IMR-90 (cell line): ENCODE measurements at regions of chr20 and their contacts with region 1.

Region 1: DNA sequence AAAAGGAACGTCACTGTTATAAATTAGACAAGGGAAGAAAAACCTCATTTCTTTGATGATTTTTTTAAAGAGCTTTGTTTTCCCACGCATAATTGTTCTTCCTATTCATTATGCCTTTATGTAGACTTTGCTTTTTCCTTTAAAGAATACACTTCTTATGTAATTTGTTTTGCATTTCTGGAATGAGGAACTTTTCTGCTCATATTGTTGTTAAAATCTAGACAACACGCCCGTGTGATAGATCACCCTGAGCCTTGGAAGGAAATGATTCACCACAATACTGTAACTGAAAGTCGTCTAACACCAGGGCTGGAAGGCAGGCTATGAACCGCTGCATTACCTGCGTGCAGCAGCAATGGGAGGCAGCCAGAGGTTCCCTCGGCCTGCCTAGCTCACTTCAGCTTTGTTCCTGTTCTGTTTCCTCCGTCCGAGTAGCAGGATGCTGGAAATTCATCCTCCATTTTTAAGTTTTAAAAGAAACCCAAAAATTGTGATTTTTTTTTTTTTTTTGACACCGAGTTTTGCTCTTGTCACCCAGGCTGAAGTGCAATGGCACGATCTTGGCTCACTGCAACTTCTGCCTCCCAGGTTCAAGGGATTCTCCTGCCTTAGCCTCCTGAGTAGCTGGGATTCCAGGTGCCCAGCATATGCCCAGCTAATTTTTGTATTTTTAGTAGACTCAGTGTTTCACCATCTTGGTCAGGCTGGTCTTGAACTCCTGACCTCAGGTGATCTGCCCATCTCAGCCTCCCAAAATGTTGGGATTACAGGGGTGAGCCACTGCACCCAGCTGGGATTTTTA is 49.6 kb upstream of the ZNF217 start:
- DNase-seq: peak; percentile 80
- ATAC-seq: peak; percentile 92
- H3K4me3 ChIP-seq: no peak overlapping the region
- H3K27ac ChIP-seq: peak overlapping the region; percentile 56
- H3K4me1 ChIP-seq: peaks cover 10% of the 10 kb centered on the region
- H3K27me3 ChIP-seq: no peaks in the 10 kb centered on the region
- CTCF ChIP-seq: no peak
- POLR2A ChIP-seq: no peak
- RAD21 ChIP-seq: peak; percentile 21; the same call in 1 of the 2 replicates

Region 2: DNA sequence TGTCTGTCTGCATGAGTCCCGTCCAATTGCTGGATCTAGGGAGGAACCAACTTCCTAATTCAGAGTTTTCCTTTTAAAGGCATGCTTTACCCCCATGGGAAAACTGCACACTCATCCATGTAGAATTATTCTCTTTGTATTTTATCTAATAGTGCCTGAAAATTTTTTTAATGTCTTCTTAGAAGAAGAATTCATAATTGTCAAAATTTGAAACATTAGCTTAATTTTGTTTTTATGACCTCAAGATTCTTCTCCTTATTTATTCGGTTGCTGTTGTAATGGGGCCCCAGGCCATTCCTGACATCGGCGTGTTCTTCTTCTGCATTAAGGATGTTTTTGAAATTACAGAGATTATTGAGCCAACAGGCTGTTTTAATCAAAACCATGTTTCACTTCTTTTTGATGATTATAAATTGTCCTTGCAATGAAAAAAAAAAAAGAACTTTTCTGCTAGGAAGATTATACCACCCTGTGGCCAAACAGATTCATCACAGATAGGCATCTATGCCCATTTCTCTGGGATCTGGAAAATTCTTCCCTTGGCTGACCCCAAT is 149.8 kb before region 1 on chr20:
- CTCF ChIA-PET with region 1: no interaction called
- POLR2A ChIA-PET with region 1: no interaction called
- dilution Hi-C with region 1: no loop called
- in situ Hi-C with region 1: no loop called
- intact Hi-C with region 1: no loop called
- DNase-seq: no peak
- ATAC-seq: no peak
- H3K4me3 ChIP-seq: no peak overlapping the region
- H3K27ac ChIP-seq: no peak overlapping the region
- H3K4me1 ChIP-seq: no peaks in the 10 kb centered on the region
- H3K27me3 ChIP-seq: no peaks in the 10 kb centered on the region
- CTCF ChIP-seq: no peak
- POLR2A ChIP-seq: no peak
- RAD21 ChIP-seq: no peak

Region 3: GRCh38 chr20:53623454-53624211 is 19.6 kb before region 1 on chr20:
- CTCF ChIA-PET with region 1: interaction called, 4 read pairs
- POLR2A ChIA-PET with region 1: no interaction called
- dilution Hi-C with region 1: no loop called
- in situ Hi-C with region 1: no loop called
- intact Hi-C with region 1: loop called (anchors 2 kb)
- DNase-seq: peak; percentile 77
- ATAC-seq: peak; percentile 87
- H3K4me3 ChIP-seq: peak overlapping the region; percentile 43
- H3K27ac ChIP-seq: peak overlapping the region; percentile 65
- H3K4me1 ChIP-seq: peaks cover 15% of the 10 kb centered on the region
- H3K27me3 ChIP-seq: no peaks in the 10 kb centered on the region
- CTCF ChIP-seq: 0 out of 2 replicates have a peak, but pooled peaks have one; percentile 12
- POLR2A ChIP-seq: peak; percentile 66
- RAD21 ChIP-seq: peak; percentile 14; the same call in 1 of the 2 replicates

Region 4: GRCh38 chr20:53692413-53693067 is 49.3 kb after region 1 on chr20:
- CTCF ChIA-PET with region 1: no interaction called
- POLR2A ChIA-PET with region 1: no interaction called
- dilution Hi-C with region 1: no loop called
- in situ Hi-C with region 1: no loop called
- intact Hi-C with region 1: loop called (anchors 5 kb)
- DNase-seq: peak; percentile 86
- ATAC-seq: peak; percentile 88
- H3K4me3 ChIP-seq: no peak overlapping the region
- H3K27ac ChIP-seq: no peak overlapping the region
- H3K4me1 ChIP-seq: peaks cover 3% of the 10 kb centered on the region; the same call in 1 of the 2 replicates
- H3K27me3 ChIP-seq: no peaks in the 10 kb centered on the region
- CTCF ChIP-seq: no peak
- POLR2A ChIP-seq: no peak
- RAD21 ChIP-seq: no peak